ENCODE measurements at regions of chr9 and their contacts with region 1.

Region 1: GRCh38 chr9:99104459-99105151 is at the start of gene TGFBR1:
- DNase-seq: peak; percentile 87 to 98 (median 89)
- ATAC-seq: peak; percentile 91
- H3K4me3 ChIP-seq: peak within 1 kb of the TSS; percentile 73
- H3K4me3 Mint-ChIP-seq: peak within 1 kb of the TSS; percentile 90 to 97 (median 94)
- H3K27ac ChIP-seq: peak within 1 kb of the TSS; percentile 74
- H3K27ac Mint-ChIP-seq: peak within 1 kb of the TSS; percentile 78 to 99 (median 95)
- H3K4me1 ChIP-seq: peaks cover 43 to 49% of the 10 kb centered on the region in 2 donors
- H3K4me1 Mint-ChIP-seq: peaks cover 36 to 65% (median 59%) of the 10 kb centered on the region in 7 donors
- H3K27me3 ChIP-seq: no peaks in the 10 kb centered on the region
- H3K27me3 Mint-ChIP-seq: no peaks in the 10 kb centered on the region
- total RNA-seq, gene TGFBR1: 20.6 to 95.5 (median 29.5) TPM

Region 2: GRCh38 chr9:99076483-99077171 is 28.0 kb before region 1 on chr9:
- CTCF ChIA-PET with region 1: interaction called, 4 read pairs
- POLR2A ChIA-PET with region 1: interaction called, 6 read pairs
- intact Hi-C with region 1: loop called in 1 of 2 experiments (anchors 1 kb)
- DNase-seq: peak in 7 of 9 donors; percentile 17 to 58 (median 42)
- ATAC-seq: peak; percentile 95
- H3K4me3 ChIP-seq: no peak overlapping the region
- H3K4me3 Mint-ChIP-seq: peak overlapping the region; percentile 1 to 79 (median 62)
- H3K27ac ChIP-seq: peak overlapping the region; percentile 18
- H3K27ac Mint-ChIP-seq: peak overlapping the region; percentile 53 to 93 (median 81)
- H3K4me1 ChIP-seq: peaks cover 17 to 26% of the 10 kb centered on the region in 2 donors
- H3K4me1 Mint-ChIP-seq: peaks cover 35 to 75% (median 60%) of the 10 kb centered on the region in 7 donors
- H3K27me3 ChIP-seq: no peaks in the 10 kb centered on the region
- H3K27me3 Mint-ChIP-seq: peaks cover 0 to 3% (median 0%) of the 10 kb centered on the region in 5 donors

Region 3: DNA sequence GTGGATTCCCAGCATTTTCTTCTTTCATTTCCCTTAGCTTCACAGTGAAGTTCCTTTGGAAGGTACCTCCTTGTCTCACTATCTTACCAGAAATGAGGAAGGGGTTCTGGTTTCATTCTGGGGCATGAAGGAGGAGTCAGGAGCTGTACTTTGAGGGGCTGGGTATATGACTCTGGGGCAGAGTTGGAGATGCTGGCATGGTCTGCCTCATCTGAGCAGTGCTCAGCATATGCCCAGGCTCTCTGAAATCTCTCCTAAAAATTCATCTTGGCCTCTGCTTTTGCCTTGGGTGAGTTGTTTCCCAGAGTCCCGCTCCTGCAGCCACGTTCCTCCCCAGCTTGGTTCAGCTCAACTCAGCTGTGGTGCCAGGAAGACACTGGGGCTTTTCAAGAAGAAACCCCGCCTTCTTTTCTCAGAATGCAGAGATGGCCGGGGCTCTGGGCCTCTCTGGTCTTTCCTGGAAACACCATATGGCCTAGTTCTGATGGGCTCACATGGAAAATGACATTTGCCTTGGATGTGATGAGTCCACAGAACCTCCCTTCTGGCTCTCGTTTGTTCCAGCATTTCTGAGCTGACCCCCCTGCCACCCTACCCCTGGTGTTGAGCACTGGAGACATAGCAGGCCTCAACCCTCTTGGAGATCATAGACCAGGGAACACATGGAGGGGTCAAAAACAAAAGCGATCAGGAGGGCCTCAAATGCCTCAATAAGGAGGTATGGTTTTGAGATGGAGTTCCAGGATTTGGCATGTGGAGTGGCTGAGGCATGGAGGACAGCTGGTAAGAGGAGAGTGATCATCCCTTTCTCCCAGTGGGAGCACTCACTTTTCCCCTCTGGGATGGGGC is 11.7 kb before region 1 on chr9:
- CTCF ChIA-PET with region 1: interaction called, 4 read pairs
- POLR2A ChIA-PET with region 1: interaction called, 5 read pairs
- intact Hi-C with region 1: loop called in 1 of 2 experiments (anchors 1 kb)
- DNase-seq: peak in 1 of 9 donors; percentile 41
- ATAC-seq: peak; percentile 44
- H3K4me3 ChIP-seq: no peak overlapping the region
- H3K4me3 Mint-ChIP-seq: peak overlapping the region in 9 of 10 donors; percentile 11 to 72 (median 61)
- H3K27ac ChIP-seq: no peak overlapping the region
- H3K27ac Mint-ChIP-seq: peak overlapping the region in 6 of 9 donors; percentile 8 to 94 (median 62)
- H3K4me1 ChIP-seq: peaks cover 15 to 22% of the 10 kb centered on the region in 2 donors
- H3K4me1 Mint-ChIP-seq: peaks cover 28 to 74% (median 42%) of the 10 kb centered on the region in 7 donors
- H3K27me3 ChIP-seq: no peaks in the 10 kb centered on the region
- H3K27me3 Mint-ChIP-seq: no peaks in the 10 kb centered on the region

Region 4: GRCh38 chr9:99118782-99119466 is 14.3 kb after region 1 on chr9:
- CTCF ChIA-PET with region 1: interaction called, 17 read pairs
- POLR2A ChIA-PET with region 1: interaction called, 102 read pairs
- intact Hi-C with region 1: loop called (anchors 1 to 2 kb)
- DNase-seq: peak in 8 of 9 donors; percentile 40 to 79 (median 70)
- ATAC-seq: peak; percentile 99
- H3K4me3 ChIP-seq: peak overlapping the region; percentile 39
- H3K4me3 Mint-ChIP-seq: peak overlapping the region; percentile 69 to 92 (median 82)
- H3K27ac ChIP-seq: peak overlapping the region; percentile 62
- H3K27ac Mint-ChIP-seq: peak overlapping the region; percentile 39 to 96 (median 86)
- H3K4me1 ChIP-seq: peaks cover 59 to 76% of the 10 kb centered on the region in 2 donors
- H3K4me1 Mint-ChIP-seq: peaks cover 57 to 97% (median 89%) of the 10 kb centered on the region in 7 donors
- H3K27me3 ChIP-seq: no peaks in the 10 kb centered on the region
- H3K27me3 Mint-ChIP-seq: no peaks in the 10 kb centered on the region

Region 5: GRCh38 chr9:99134893-99135341 is 30.3 kb after region 1 on chr9:
- CTCF ChIA-PET with region 1: interaction called, 47 read pairs
- POLR2A ChIA-PET with region 1: interaction called, 74 read pairs
- intact Hi-C with region 1: loop called (anchors 1 to 5 kb)
- DNase-seq: peak in 7 of 9 donors; percentile 32 to 54 (median 42)
- ATAC-seq: peak; percentile 67
- H3K4me3 ChIP-seq: peak overlapping the region; percentile 32
- H3K4me3 Mint-ChIP-seq: peak overlapping the region; percentile 61 to 82 (median 74)
- H3K27ac ChIP-seq: peak overlapping the region; percentile 50
- H3K27ac Mint-ChIP-seq: peak overlapping the region; percentile 72 to 96 (median 89)
- H3K4me1 ChIP-seq: peaks cover 21 to 53% of the 10 kb centered on the region in 2 donors
- H3K4me1 Mint-ChIP-seq: peaks cover 48 to 95% (median 90%) of the 10 kb centered on the region in 7 donors
- H3K27me3 ChIP-seq: no peaks in the 10 kb centered on the region
- H3K27me3 Mint-ChIP-seq: no peaks in the 10 kb centered on the region